HEK293 (cell line): ENCODE measurements at regions of chr14 and their contacts with region 1.

Region 1: GRCh38 chr14:68926236-68926635 is 52.9 kb downstream of the ACTN1 start:
- H3K4me3 ChIP-seq: no peak overlapping the region
- H3K27ac ChIP-seq: no peak overlapping the region
- H3K4me1 ChIP-seq: no peaks in the 10 kb centered on the region; the same call in 1 of the 2 replicates
- CTCF ChIP-seq: no peak

Region 2: DNA sequence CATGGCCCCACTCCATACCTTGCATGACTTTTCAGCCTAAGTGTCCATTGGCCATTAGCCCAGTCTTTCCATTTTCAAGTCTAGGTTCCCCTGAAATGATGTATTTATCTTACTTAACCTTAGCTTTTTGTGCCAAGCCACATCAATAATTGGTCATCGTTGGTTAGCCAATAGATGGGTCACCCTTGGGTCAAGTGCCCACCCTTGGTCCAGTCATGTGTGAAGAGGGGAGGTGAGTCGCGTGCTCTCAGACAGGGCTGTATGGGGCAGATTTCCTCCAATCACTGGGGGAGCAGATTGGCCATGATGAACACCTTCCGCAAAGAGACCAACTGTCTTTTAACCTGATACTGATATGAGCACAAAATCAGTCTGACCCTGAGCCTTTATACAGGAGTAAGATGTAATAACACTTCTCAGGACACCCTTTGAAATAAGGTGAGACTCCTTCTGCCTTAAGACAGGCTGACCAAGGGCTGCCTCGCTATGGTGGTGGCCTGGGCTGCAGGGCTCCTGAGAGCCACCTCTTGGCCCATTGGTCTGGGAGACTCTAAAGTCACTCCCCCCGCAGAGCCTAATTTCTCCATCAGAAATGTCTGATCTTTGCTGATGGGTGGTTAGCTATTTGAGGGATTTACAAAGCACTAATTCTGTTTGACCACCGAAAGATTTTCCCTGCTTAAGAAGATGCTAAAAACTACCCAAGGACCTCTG is 276.6 kb before region 1 on chr14:
- CTCF ChIA-PET with region 1: no interaction called
- POLR2A ChIA-PET with region 1: no interaction called
- H3K4me3 ChIP-seq: no peak overlapping the region
- H3K27ac ChIP-seq: no peak overlapping the region
- H3K4me1 ChIP-seq: no peaks in the 10 kb centered on the region
- CTCF ChIP-seq: no peak

Region 3: DNA sequence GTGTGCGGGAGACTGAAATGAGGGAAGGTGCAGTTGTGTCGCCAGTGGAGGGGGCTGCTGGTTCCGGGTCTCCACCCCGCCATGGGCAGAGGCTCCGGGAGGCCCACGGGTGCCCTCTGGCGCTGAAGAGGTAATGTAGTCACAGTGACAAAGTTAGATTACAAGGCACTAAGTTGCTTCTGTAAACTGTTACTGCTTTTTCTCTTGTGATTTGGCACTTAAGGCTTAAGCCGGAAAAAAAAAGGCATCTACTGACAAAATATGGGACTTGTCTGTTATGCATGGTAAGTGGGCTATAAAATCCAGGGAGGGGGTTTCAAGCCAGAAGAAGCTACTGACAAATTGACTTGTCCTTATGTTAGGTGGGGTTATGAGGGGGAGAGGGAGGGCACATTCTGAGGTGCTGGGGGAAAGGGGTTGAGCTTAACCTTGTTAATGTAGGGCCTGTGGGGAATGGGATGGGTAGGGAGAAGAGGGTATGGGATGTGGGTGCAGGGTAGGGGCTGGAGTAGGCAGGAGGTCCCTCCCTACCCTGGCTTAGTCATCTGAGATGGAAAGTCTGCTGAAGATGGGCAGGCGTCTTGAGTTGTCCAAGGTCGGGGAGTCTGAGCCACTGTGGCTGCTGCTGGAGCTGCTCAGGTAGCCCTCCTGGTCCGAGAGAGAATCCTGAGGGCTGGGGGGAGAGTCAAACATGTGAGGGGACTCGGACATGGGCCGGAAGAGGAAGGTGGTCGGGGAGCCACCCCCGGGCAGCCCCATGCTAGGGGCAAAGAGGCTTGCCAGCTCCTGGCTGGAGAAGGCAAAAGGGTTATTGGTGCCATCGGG is 137.0 kb before region 1 on chr14:
- CTCF ChIA-PET with region 1: no interaction called
- POLR2A ChIA-PET with region 1: no interaction called
- H3K4me3 ChIP-seq: no peak overlapping the region
- H3K27ac ChIP-seq: 0 out of 2 replicates have a peak overlapping the region, but pooled peaks have one; percentile 11
- H3K4me1 ChIP-seq: peaks cover 7% of the 10 kb centered on the region; the same call in 1 of the 2 replicates
- CTCF ChIP-seq: peak; percentile 78

Region 4: GRCh38 chr14:68939893-68940613 is 13.8 kb after region 1 on chr14:
- CTCF ChIA-PET with region 1: interaction called, 27 read pairs
- POLR2A ChIA-PET with region 1: interaction called, 5 read pairs
- H3K4me3 ChIP-seq: no peak overlapping the region
- H3K27ac ChIP-seq: peak overlapping the region; percentile 29; the same call in 1 of the 2 replicates
- H3K4me1 ChIP-seq: peaks cover 11% of the 10 kb centered on the region
- CTCF ChIP-seq: no peak

Region 5: DNA sequence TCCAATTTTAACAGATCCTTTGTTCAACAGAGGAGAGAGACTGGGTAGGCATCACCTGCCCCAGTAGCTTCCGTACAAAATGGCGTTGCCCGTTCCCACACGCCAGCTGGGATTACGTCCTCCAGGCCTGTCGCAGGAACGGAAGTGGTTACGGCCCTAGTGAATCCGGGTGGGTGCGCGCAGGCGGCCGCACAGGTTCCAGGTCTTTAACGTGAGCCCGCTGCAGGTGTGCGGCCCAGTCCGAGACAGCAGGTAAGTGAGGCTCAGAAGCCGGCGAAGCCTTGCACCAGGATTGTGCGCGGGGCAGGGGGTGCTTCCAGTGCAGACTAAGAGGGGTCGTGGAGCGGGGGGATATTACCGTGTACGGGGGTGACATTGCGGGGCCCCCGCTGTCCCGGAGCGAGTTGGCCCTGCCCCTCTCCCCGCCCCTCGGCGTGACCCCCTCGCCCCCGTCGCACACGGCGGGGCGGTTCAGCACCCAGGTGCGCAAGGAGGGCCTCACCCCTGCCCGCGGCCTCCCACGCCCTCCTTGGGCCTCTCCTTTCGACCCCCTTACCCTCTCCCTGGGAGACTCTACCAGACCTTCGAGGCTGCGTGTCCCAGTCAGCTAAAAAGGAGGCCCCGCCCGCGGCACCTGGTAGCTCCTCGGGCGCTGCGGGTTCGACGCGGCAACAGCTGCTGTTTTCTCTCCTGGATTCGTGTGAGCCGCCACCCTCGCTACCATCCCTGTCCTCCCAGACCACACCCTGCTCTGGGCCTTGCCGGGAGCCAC is 265.3 kb after region 1 on chr14 and contains the start of gene EXD2:
- CTCF ChIA-PET with region 1: no interaction called
- POLR2A ChIA-PET with region 1: no interaction called
- H3K4me3 ChIP-seq: peak within 1 kb of the TSS; percentile 96
- H3K27ac ChIP-seq: peak within 1 kb of the TSS; percentile 82
- H3K4me1 ChIP-seq: peaks cover 8% of the 10 kb centered on the region
- CTCF ChIP-seq: no peak